ENCODE measurements at regions of chr1 and their contacts with region 1.

Region 1: GRCh38 chr1:205430696-205431305 is 8.9 kb upstream of the LEMD1 start:
- DNase-seq: peak; percentile 65 to 85
- ATAC-seq: peak; percentile 66
- H3K4me3 ChIP-seq: peak overlapping the region; percentile 14 to 55
- H3K27ac ChIP-seq: no peak overlapping the region
- H3K4me1 ChIP-seq: no peaks in the 10 kb centered on the region
- H3K27me3 ChIP-seq: no peaks in the 10 kb centered on the region

Region 2: DNA sequence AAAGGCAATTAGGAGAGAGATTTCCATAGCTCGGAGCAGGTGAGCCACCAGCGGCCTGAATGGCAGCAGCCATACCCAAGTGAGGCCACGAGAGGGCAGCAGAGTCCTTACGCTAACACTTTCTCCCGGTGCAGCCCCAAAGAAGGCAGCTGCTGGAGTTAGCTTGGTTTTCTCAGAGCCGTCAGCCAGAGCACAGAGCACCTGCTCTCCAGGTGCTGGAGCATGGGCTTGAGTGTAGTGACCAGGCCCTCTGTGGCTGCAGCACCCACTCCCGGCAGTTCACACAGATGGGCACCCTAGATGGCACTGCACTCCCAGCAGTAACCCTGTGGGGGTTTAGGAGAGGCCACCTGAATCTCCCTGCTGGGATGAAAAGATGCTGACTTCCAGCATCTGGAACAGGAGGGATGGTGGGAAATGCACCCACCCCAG is 157.2 kb before region 1 on chr1:
- intact Hi-C with region 1: loop called in 1 of 2 experiments (anchors 10 kb)
- DNase-seq: peak; percentile 88 to 93
- ATAC-seq: peak; percentile 87
- H3K4me3 ChIP-seq: no peak overlapping the region
- H3K27ac ChIP-seq: no peak overlapping the region
- H3K4me1 ChIP-seq: peaks cover 0 to 2% of the 10 kb centered on the region in 2 donors
- H3K27me3 ChIP-seq: no peaks in the 10 kb centered on the region

Region 3: DNA sequence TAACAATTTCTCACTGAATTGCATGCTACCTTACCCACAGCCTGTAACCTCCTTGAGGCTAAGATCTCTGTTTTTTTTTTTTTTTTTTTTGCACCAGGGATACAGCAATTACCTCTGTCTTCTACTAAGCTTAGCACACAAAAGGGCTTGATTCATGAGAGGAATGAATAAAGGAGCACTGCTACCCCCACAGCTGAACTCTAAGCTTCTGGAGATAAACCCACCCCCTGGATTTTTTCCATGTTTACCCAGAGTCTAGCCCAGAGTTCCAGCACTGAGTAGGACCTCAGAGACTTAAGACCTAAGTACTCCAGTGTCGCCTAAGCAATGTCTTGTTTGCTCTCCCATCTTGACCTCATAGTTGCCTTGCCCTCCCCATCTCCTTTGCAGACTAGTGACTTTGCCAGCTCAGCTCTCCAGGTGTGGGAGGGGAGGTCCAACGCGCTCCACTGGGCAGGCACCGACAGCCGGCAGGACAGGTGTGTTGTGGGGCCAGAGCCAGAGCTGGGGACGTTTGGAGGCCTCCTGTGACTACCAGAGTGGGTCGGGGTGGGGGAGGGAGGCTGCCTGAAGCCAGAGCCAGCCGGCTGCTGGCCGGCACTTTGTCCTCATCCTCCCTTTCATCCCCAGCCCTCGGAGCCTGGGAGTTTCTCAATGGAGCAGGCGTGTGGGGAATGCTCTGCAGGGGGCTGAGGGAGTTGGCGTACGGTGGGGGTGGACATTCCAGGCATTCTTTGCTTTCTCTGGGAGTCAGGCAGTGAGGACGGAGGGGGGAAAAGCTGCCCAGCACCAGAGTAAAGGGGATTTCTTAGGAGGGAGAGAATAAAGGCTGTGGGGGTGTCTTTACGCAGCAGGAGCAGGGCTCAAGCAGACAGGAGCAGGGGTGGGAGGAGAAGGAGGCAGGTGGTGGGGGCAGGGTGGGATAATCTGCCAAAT is 129.6 kb before region 1 on chr1:
- intact Hi-C with region 1: no loop called
- DNase-seq: peak in 1 of 2 donors; percentile 83
- ATAC-seq: peak; percentile 50
- H3K4me3 ChIP-seq: no peak overlapping the region
- H3K27ac ChIP-seq: no peak overlapping the region
- H3K4me1 ChIP-seq: no peaks in the 10 kb centered on the region
- H3K27me3 ChIP-seq: no peaks in the 10 kb centered on the region

Region 4: GRCh38 chr1:205321164-205321958 is 109.4 kb before region 1 on chr1 and contains the start of gene NUAK2:
- intact Hi-C with region 1: no loop called
- DNase-seq: peak; percentile 94 to 95
- ATAC-seq: peak; percentile 92
- H3K4me3 ChIP-seq: peak within 1 kb of the TSS; percentile 7 to 28
- H3K27ac ChIP-seq: no peak within 1 kb of the TSS
- H3K4me1 ChIP-seq: no peaks in the 10 kb centered on the region
- H3K27me3 ChIP-seq: no peaks in the 10 kb centered on the region
- total RNA-seq, gene NUAK2: 1.7 to 2.5 TPM

Region 5: GRCh38 chr1:205335643-205336091 is 95.1 kb before region 1 on chr1:
- intact Hi-C with region 1: loop called in 1 of 2 experiments (anchors 2 kb)
- DNase-seq: peak; percentile 88 to 91
- ATAC-seq: peak; percentile 74
- H3K4me3 ChIP-seq: no peak overlapping the region
- H3K27ac ChIP-seq: no peak overlapping the region
- H3K4me1 ChIP-seq: no peaks in the 10 kb centered on the region
- H3K27me3 ChIP-seq: no peaks in the 10 kb centered on the region

Region 6: GRCh38 chr1:205354259-205354904 is 76.4 kb before region 1 on chr1:
- intact Hi-C with region 1: loop called (anchors 1 to 5 kb)
- DNase-seq: peak; percentile 67 to 72
- ATAC-seq: peak; percentile 66
- H3K4me3 ChIP-seq: no peak overlapping the region
- H3K27ac ChIP-seq: no peak overlapping the region
- H3K4me1 ChIP-seq: no peaks in the 10 kb centered on the region
- H3K27me3 ChIP-seq: no peaks in the 10 kb centered on the region

Region 7: GRCh38 chr1:205365945-205366463 is 64.8 kb before region 1 on chr1:
- intact Hi-C with region 1: no loop called
- DNase-seq: no peak
- ATAC-seq: no peak
- H3K4me3 ChIP-seq: no peak overlapping the region
- H3K27ac ChIP-seq: no peak overlapping the region
- H3K4me1 ChIP-seq: no peaks in the 10 kb centered on the region
- H3K27me3 ChIP-seq: no peaks in the 10 kb centered on the region

Region 8: DNA sequence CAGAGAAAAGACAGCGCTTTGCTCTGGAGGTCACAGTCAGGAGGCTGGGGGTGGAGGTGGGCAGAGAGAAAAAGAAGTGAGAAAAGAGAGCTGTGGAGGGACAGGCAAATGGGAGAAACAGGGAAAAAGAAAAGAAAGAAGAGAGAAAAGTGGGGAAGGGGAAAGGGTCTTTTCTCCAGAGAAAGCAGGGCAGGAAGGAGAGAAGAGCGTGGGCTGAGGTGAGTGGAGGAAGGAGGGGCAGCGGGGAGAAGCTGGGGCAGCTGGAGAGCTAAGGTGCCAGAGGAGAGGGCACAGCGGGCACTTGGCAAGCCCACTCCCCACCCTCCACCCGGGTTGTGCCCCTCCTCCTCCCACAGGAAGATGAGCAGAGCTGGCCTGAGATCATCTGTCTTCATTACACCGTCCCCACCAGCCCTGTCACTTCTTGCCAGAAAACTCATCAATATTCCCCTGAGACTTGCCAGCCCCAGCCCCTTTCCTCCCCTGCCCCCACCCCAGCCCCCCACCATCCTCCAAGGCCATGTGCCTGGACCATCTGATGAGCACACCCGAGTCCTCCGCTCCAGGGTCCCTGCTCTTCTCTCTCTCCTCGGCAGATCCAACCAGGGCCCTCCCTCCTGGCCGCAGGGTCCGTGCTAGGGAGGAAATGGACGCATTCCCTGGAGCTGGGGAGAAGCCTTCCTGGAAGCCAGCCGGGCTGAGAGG is 42.1 kb after region 1 on chr1:
- intact Hi-C with region 1: loop called in 1 of 2 experiments (anchors 5 kb)
- DNase-seq: no peak
- ATAC-seq: no peak
- H3K4me3 ChIP-seq: no peak overlapping the region
- H3K27ac ChIP-seq: no peak overlapping the region
- H3K4me1 ChIP-seq: no peaks in the 10 kb centered on the region
- H3K27me3 ChIP-seq: no peaks in the 10 kb centered on the region